ENCODE measurements at regions of chr15 and their contacts with region 1.

Region 1: GRCh38 chr15:74635228-74635627 is 19.6 kb downstream of the CLK3 start:
- DNase-seq: peak; percentile 86

Region 2: GRCh38 chr15:74373731-74374647 is 261.2 kb before region 1 on chr15:
- intact Hi-C with region 1: loop called (anchors 5 to 10 kb)
- DNase-seq: peak; percentile 97

Region 3: GRCh38 chr15:74723754-74724334 is 88.6 kb after region 1 on chr15:
- intact Hi-C with region 1: no loop called
- DNase-seq: no peak

Region 4: GRCh38 chr15:74752491-74753020 is 117.3 kb after region 1 on chr15:
- intact Hi-C with region 1: loop called in 1 of 2 experiments (anchors 5 kb)
- DNase-seq: no peak

Region 5: DNA sequence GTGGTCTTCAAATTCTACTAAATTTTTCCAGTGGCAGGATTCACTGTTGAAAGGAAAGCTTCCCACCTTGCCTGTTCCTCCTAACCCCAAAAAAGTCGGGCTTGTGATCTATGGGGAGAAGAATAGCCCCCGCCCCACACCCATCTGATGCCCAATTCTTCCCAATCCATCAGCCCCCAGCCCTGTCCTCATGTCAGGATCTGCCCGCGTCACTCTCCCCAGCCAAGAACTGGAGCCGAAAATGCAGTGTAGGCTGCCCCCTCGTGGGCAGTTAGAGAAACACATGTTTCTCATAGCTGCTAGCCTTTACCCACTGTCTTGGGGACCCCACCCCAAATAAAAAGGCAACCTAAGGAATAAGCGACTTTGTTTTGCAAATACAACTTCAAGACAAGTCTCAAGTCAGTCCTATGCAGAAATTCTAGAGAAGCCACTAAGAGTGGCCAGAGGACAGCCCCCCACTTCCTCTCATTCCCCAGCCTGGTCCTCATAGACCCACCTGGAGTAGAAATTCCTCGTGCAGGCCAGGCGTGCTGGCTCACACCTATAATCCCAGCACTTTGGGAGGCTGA is 133.6 kb after region 1 on chr15:
- intact Hi-C with region 1: loop called (anchors 2 to 5 kb)
- DNase-seq: peak; percentile 89

Region 6: GRCh38 chr15:74948795-74949194 is 313.6 kb after region 1 on chr15:
- intact Hi-C with region 1: loop called in 1 of 2 experiments (anchors 10 kb)
- DNase-seq: no peak

Region 7: GRCh38 chr15:75759416-75760130 is 1124.3 kb after region 1 on chr15:
- intact Hi-C with region 1: loop called in 1 of 2 experiments (anchors 5 kb)
- DNase-seq: no peak